CD4-positive, alpha-beta T cell (primary cell): ENCODE measurements at regions of chr19 and their contacts with region 1.

Region 1: DNA sequence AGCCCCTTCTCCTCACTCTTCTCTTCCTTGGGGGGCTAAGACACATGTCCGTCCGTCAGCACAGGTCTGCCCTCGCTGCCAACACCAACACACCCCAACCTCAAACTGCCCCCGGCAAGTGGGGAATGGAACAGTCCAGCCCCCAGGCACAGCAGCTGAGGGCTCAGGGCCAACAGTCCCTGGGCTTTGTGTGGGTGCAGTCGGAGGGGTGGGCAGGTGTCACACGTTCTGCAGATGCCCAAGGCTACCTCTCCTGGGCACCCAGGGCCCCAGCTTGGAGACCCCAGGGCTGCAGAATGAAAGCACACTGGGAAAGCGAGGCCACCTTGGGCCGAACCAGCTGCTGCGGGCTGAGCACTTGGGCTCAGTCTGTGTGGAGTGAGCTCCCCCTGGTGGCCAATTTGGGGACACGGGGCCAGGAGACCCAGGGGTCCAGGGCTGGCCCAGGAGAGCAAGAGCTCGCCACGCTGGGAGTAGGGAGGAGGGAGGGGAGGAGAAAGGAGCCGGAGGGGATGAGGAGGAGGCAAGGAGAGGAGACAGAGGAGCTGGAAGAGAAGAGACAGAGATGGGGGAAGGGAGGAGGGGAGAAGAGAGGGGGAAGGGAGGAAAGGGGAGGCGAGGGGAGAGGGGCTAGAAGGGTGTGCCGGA is 14.0 kb upstream of the ATP8B3 start:
- DNase-seq: peak; percentile 69 to 88 (median 74)
- ATAC-seq: peak; percentile 86
- H3K4me3 ChIP-seq: no peak overlapping the region
- H3K4me3 Mint-ChIP-seq: peak overlapping the region; percentile 15
- H3K27ac ChIP-seq: no peak overlapping the region
- H3K27ac Mint-ChIP-seq: peak overlapping the region; percentile 30
- H3K4me1 ChIP-seq: peaks cover 10% of the 10 kb centered on the region
- H3K4me1 Mint-ChIP-seq: peaks cover 4% of the 10 kb centered on the region
- H3K27me3 ChIP-seq: no peaks in the 10 kb centered on the region
- H3K27me3 Mint-ChIP-seq: no peaks in the 10 kb centered on the region
- CTCF ChIP-seq: peak; percentile 86

Region 2: DNA sequence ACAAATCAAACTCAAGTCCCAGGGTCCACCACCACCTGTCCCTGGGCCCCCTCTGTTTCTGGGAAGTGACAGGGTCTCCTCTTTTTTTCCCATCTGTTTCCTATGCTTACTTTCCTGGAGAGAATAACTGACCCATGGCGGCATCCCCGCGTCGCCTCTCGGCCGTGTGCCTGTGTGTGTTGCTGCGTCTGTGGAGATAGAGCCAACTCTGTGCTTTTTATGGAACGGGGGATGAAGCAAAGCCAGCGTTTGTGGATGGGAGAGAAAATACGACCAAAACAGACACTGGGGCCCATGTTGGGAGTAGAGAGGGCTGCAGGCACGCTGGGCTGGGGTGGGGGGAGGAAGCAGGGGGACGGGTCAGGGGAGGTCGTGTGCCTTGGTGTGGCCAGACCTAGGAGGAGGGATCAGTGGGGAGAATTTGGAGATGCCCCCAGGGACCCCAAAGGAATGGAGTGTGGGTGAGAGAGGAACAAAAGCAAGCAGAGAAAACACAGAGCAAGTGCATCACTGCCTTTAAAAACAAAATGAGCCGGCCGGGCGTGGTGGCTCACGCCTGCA is 285.6 kb before region 1 on chr19:
- CTCF ChIA-PET with region 1: no interaction called
- POLR2A ChIA-PET with region 1: no interaction called
- intact Hi-C with region 1: loop called in 1 of 2 experiments (anchors 10 kb)
- DNase-seq: no peak
- ATAC-seq: no peak
- H3K4me3 ChIP-seq: no peak overlapping the region
- H3K4me3 Mint-ChIP-seq: no peak overlapping the region
- H3K27ac ChIP-seq: no peak overlapping the region
- H3K27ac Mint-ChIP-seq: no peak overlapping the region
- H3K4me1 ChIP-seq: peaks cover 5% of the 10 kb centered on the region
- H3K4me1 Mint-ChIP-seq: no peaks in the 10 kb centered on the region
- H3K27me3 ChIP-seq: peaks cover 19 to 27% of the 10 kb centered on the region in 2 experiments
- H3K27me3 Mint-ChIP-seq: peaks cover 35% of the 10 kb centered on the region
- CTCF ChIP-seq: no peak

Region 3: GRCh38 chr19:1783354-1783753 is 42.7 kb before region 1 on chr19:
- CTCF ChIA-PET with region 1: no interaction called
- POLR2A ChIA-PET with region 1: no interaction called
- intact Hi-C with region 1: no loop called
- DNase-seq: no peak
- ATAC-seq: no peak
- H3K4me3 ChIP-seq: no peak overlapping the region
- H3K4me3 Mint-ChIP-seq: no peak overlapping the region
- H3K27ac ChIP-seq: no peak overlapping the region
- H3K27ac Mint-ChIP-seq: no peak overlapping the region
- H3K4me1 ChIP-seq: no peaks in the 10 kb centered on the region
- H3K4me1 Mint-ChIP-seq: no peaks in the 10 kb centered on the region
- H3K27me3 ChIP-seq: peaks cover 41 to 48% of the 10 kb centered on the region in 2 experiments
- H3K27me3 Mint-ChIP-seq: peaks cover 60% of the 10 kb centered on the region
- CTCF ChIP-seq: no peak

Region 4: DNA sequence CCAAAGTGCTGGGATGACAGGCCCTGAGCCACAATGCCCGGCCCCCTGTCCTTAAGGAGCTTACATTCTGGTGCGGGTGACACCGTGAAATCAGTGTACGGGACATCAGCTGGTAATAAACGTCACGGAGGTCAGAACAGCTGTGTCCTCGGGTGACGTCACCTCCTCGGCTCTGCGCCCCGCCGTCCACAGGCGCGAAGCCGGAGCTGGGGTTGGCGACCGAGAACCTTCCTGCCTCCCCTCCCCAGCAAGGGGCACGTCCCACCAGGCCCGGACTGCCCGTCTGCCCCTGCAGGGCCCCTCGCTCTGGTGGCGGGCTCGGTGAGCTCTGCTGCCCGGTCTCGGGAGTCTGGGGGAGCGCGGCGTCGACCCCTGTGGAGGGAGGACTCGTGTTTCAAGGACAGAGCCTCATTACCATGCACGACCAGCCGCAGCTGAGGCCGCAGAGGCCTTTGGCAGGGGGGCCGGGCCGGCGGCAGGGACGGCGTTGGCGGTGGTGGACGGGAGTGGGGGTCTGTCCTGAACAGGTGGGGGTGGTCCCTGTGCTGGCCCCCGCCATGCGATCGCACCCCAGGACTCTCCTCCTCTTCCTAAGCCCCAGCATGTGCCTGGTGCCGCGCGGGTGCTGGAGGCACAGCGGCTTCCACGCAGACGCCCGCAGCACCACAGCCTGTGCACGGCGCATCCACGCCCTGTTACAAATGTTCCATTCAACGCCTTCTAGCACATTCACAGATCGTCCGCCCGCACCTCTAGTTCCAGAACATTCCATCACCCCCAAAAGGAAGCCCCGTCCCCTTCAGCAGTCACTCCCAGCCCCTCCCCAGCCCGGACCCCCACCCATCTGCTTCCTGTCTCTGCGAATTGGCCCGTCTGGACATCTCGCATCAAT is 476.5 kb after region 1 on chr19:
- CTCF ChIA-PET with region 1: no interaction called
- POLR2A ChIA-PET with region 1: no interaction called
- intact Hi-C with region 1: no loop called
- DNase-seq: peak in 3 of 14 experiments; percentile 26 to 63 (median 50)
- ATAC-seq: peak; percentile 80
- H3K4me3 ChIP-seq: peak overlapping the region; percentile 10
- H3K4me3 Mint-ChIP-seq: peak overlapping the region; percentile 54
- H3K27ac ChIP-seq: no peak overlapping the region
- H3K27ac Mint-ChIP-seq: peak overlapping the region; percentile 9
- H3K4me1 ChIP-seq: peaks cover 21% of the 10 kb centered on the region
- H3K4me1 Mint-ChIP-seq: peaks cover 7% of the 10 kb centered on the region
- H3K27me3 ChIP-seq: peaks cover 34 to 36% of the 10 kb centered on the region in 2 experiments
- H3K27me3 Mint-ChIP-seq: peaks cover 42% of the 10 kb centered on the region
- CTCF ChIP-seq: no peak